Spleen (tissue), 13 donors: ENCODE measurements at regions of chr12 and their contacts with region 1.

Region 1: GRCh38 chr12:13376627-13377373 is 180.3 kb downstream of the EMP1 start:
- DNase-seq: no peak
- H3K4me3 ChIP-seq: no peak overlapping the region
- H3K27ac ChIP-seq: no peak overlapping the region
- H3K4me1 ChIP-seq: peaks cover 0 to under 1% (median 0%) of the 10 kb centered on the region in 6 donors
- H3K27me3 ChIP-seq: no peaks in the 10 kb centered on the region
- CTCF ChIP-seq: no peak
- POLR2A ChIP-seq: no peak

Region 2: DNA sequence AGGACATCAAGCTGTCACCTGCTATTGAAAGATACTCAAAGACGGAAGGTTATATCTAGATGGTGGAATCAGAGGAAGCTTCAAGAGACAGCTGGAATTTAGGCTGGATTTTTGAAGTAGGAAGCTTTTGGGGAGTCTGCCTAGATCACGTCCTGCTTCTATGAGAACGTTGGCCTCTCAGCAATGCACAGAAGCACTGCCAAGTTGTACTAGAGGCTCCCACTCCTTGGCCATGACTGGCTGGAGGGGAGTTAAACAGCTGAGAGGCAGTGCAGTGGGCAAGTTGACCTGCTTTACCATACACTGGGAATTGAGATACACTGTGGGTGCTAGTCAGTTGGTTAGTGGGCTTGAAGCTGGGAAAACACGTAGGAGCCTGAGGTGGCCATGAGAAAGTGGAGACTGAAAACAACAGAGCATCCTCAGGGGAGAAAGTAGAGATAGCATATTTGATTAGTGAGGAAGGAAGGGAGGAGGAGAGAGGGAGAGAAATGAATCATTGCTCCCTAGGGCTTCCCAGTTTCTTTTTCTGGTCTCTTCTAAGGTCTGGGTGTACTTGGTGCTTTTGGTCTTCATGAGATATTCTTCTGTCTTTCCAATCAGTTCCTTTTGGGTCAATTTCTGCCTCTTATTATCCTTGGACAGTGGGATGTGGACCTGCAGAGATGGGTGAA is 69.5 kb before region 1 on chr12:
- intact Hi-C with region 1: no loop called
- DNase-seq: no peak
- H3K4me3 ChIP-seq: no peak overlapping the region
- H3K27ac ChIP-seq: no peak overlapping the region
- H3K4me1 ChIP-seq: no peaks in the 10 kb centered on the region
- H3K27me3 ChIP-seq: no peaks in the 10 kb centered on the region
- CTCF ChIP-seq: no peak
- POLR2A ChIP-seq: no peak

Region 3: GRCh38 chr12:13652105-13652504 is 275.3 kb after region 1 on chr12:
- intact Hi-C with region 1: loop called (anchors 10 kb)
- DNase-seq: no peak
- H3K4me3 ChIP-seq: no peak overlapping the region
- H3K27ac ChIP-seq: no peak overlapping the region
- H3K4me1 ChIP-seq: no peaks in the 10 kb centered on the region
- H3K27me3 ChIP-seq: no peaks in the 10 kb centered on the region
- CTCF ChIP-seq: no peak
- POLR2A ChIP-seq: no peak

Region 4: GRCh38 chr12:13772264-13772663 is 395.5 kb after region 1 on chr12:
- intact Hi-C with region 1: no loop called
- DNase-seq: no peak
- H3K4me3 ChIP-seq: no peak overlapping the region
- H3K27ac ChIP-seq: no peak overlapping the region
- H3K4me1 ChIP-seq: no peaks in the 10 kb centered on the region
- H3K27me3 ChIP-seq: no peaks in the 10 kb centered on the region
- CTCF ChIP-seq: no peak
- POLR2A ChIP-seq: no peak